ENCODE measurements at regions of chrX and their contacts with region 1.

Region 1: DNA sequence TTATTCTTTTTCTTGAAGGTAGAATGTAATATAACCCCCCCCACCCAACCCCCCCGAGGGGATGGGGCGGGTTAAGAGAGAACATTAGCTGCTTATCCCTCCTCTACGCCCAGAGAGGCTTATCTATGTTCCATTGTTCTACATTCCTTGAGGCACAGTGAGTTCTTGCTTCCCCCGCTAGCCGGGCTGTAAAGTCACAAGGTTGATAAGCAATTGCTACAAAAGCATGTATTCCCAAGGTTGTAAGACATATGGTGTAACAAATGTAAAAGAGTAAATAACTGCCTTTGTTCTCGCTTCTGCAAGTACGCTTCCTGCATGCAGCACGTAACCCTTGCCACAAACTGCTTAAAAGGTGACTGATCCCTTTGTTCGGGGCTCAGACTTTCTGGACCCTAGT is 8.2 kb downstream of the DCAF8L2 start:
- DNase-seq: peak; percentile 67 to 80
- H3K4me3 ChIP-seq: no peak overlapping the region
- H3K4me3 Mint-ChIP-seq: peak overlapping the region; percentile 33
- H3K27ac Mint-ChIP-seq: no peak overlapping the region
- H3K4me1 ChIP-seq: peaks cover 13% of the 10 kb centered on the region; the same call in 1 of the 2 replicates
- H3K4me1 Mint-ChIP-seq: peaks cover 6% of the 10 kb centered on the region
- H3K27me3 ChIP-seq: no peaks in the 10 kb centered on the region
- H3K27me3 Mint-ChIP-seq: no peaks in the 10 kb centered on the region
- CTCF ChIP-seq: no peak

Region 2: DNA sequence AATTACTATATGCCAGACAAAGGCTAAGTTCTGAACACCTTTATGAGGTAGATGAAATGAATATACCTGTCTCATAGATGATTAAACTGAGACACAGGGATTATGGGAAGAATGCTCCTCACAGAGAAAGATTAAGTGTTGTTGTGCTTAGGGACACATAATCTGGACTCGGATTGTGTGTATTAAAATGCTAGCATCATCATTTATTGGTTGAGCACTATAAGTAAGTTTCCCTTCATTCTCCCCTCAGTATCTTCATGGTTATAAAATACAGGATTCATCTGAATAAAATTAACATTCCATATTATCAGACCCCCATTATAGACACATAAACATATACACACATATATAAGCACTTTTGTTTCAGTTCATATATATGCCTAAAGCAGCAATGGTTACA is 598.7 kb before region 1 on chrX:
- CTCF ChIA-PET with region 1: no interaction called
- POLR2A ChIA-PET with region 1: no interaction called
- intact Hi-C with region 1: no loop called
- DNase-seq: no peak
- H3K4me3 ChIP-seq: no peak overlapping the region
- H3K4me3 Mint-ChIP-seq: no peak overlapping the region
- H3K27ac Mint-ChIP-seq: no peak overlapping the region
- H3K4me1 ChIP-seq: no peaks in the 10 kb centered on the region
- H3K4me1 Mint-ChIP-seq: no peaks in the 10 kb centered on the region
- H3K27me3 ChIP-seq: no peaks in the 10 kb centered on the region
- H3K27me3 Mint-ChIP-seq: no peaks in the 10 kb centered on the region
- CTCF ChIP-seq: no peak

Region 3: GRCh38 chrX:27565992-27566391 is 32.3 kb before region 1 on chrX:
- CTCF ChIA-PET with region 1: no interaction called
- POLR2A ChIA-PET with region 1: no interaction called
- intact Hi-C with region 1: loop called (anchors 1 kb)
- DNase-seq: peak; percentile 58 to 88
- H3K4me3 ChIP-seq: no peak overlapping the region
- H3K4me3 Mint-ChIP-seq: peak overlapping the region; percentile 68
- H3K27ac Mint-ChIP-seq: peak overlapping the region; percentile 94
- H3K4me1 ChIP-seq: peaks cover 30% of the 10 kb centered on the region
- H3K4me1 Mint-ChIP-seq: peaks cover 26% of the 10 kb centered on the region
- H3K27me3 ChIP-seq: no peaks in the 10 kb centered on the region
- H3K27me3 Mint-ChIP-seq: no peaks in the 10 kb centered on the region
- CTCF ChIP-seq: no peak

Region 4: DNA sequence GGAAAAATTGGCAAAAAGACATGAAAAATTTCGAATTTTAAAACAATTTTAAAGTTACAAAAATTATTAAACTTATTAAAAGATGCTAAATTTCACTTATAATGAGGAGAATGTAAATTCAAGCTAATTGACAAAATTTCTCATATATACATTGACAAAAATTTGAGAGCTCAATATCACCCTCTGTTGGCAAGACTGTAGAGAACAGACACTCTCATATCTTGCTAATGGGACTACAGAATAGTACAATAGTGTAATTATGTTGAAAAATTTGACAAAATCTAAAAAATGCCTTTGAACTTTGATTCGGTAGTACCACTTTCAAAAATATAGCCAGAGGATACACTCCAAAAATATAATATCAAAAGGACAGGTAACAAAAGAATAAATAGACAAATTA is 21.7 kb after region 1 on chrX:
- CTCF ChIA-PET with region 1: no interaction called
- POLR2A ChIA-PET with region 1: no interaction called
- intact Hi-C with region 1: loop called (anchors 1 kb)
- DNase-seq: peak in 1 of 2 experiments; percentile 5
- H3K4me3 ChIP-seq: no peak overlapping the region
- H3K4me3 Mint-ChIP-seq: no peak overlapping the region
- H3K27ac Mint-ChIP-seq: no peak overlapping the region
- H3K4me1 ChIP-seq: peaks cover 6% of the 10 kb centered on the region; the same call in 1 of the 2 replicates
- H3K4me1 Mint-ChIP-seq: peaks cover 7% of the 10 kb centered on the region
- H3K27me3 ChIP-seq: no peaks in the 10 kb centered on the region
- H3K27me3 Mint-ChIP-seq: no peaks in the 10 kb centered on the region
- CTCF ChIP-seq: peak; percentile 42 to 49

Measured in Caco-2 (cell line).